Activated B cell treated with CpG ODN at 0.5 μM for 24 hours (primary cell): ENCODE measurements at regions of chr7 and their contacts with region 1.

Region 1: GRCh38 chr7:35519971-35520809 is 174.7 kb downstream of the HERPUD2 start:
- DNase-seq: no peak
- ATAC-seq: peak; percentile 50
- H3K4me3 Mint-ChIP-seq: no peak overlapping the region
- H3K27ac Mint-ChIP-seq: no peak overlapping the region
- H3K4me1 Mint-ChIP-seq: peaks cover 3% of the 10 kb centered on the region
- H3K27me3 Mint-ChIP-seq: peaks cover 28% of the 10 kb centered on the region
- CTCF ChIP-seq: no peak

Region 2: DNA sequence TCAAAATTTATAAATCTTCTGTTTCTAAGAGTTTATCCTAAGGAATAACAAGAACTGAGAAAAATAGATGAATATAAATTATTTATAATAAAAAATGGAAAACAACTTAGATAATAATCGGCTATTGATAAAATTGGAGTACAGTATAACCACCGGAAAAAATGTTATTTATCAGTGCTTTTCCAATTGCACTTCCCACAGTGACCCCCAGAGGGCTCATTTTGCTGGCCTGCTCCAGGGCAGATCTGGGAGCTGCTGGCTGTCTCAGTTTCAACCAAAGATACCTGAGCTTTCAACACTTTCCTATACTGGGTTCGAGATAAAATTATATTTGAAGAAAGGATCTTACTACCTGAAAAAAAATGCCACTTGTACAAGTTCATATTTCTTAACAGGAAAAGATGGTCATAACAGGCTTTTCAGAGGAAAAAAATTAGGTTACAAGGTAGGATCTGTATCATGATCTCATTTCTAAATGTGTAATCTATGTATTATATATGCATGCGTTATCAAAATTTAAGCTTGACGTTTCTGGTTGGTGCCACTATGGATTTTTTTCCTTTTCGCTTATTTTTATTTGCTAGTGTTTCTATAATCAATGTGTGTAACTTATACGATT is 696.4 kb before region 1 on chr7:
- CTCF ChIA-PET with region 1: no interaction called
- POLR2A ChIA-PET with region 1: no interaction called
- intact Hi-C with region 1: loop called (anchors 5 kb)
- DNase-seq: no peak
- ATAC-seq: no peak
- H3K4me3 Mint-ChIP-seq: no peak overlapping the region
- H3K27ac Mint-ChIP-seq: no peak overlapping the region
- H3K4me1 Mint-ChIP-seq: no peaks in the 10 kb centered on the region
- H3K27me3 Mint-ChIP-seq: peaks cover 4% of the 10 kb centered on the region
- CTCF ChIP-seq: peak; percentile 71

Region 3: DNA sequence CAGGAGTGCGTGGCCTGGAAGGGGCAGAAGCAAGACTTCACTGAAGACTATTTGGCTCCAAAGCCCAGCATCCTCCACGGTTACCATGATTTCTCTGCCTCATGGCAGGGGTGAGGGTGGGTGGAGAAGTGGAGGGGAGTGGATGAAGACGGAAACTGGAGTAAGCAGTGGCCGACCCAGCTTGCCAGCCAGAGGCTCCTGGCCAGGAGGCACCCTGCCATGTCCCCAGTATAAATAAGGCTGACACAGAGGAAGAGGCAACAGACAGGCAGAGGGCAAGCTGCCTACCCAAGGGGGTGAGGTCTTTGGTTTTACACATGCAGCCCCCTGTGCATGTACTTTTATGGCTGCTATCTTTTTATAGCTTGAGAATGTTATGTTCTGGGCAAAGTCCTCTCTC is 163.7 kb before region 1 on chr7:
- CTCF ChIA-PET with region 1: no interaction called
- POLR2A ChIA-PET with region 1: no interaction called
- intact Hi-C with region 1: no loop called
- DNase-seq: no peak
- ATAC-seq: no peak
- H3K4me3 Mint-ChIP-seq: no peak overlapping the region
- H3K27ac Mint-ChIP-seq: no peak overlapping the region
- H3K4me1 Mint-ChIP-seq: no peaks in the 10 kb centered on the region
- H3K27me3 Mint-ChIP-seq: peaks cover 12% of the 10 kb centered on the region
- CTCF ChIP-seq: no peak